Right lobe of liver (tissue), 6 donors: ENCODE measurements at regions of chr7 and their contacts with region 1.

Region 1: GRCh38 chr7:7438851-7439250 is 96.8 kb downstream of the COL28A1 start:
- DNase-seq: peak in 1 of 3 donors; percentile 35
- ATAC-seq: peak; percentile 81 to 99 (median 88)
- H3K4me3 ChIP-seq: no peak overlapping the region
- H3K27ac ChIP-seq: no peak overlapping the region
- H3K4me1 ChIP-seq: peaks cover 0 to 7% (median 0%) of the 10 kb centered on the region in 4 donors
- H3K27me3 ChIP-seq: no peaks in the 10 kb centered on the region
- CTCF ChIP-seq: no peak
- POLR2A ChIP-seq: no peak

Region 2: GRCh38 chr7:7535691-7536090 is 96.8 kb after region 1 on chr7 and contains the start of gene COL28A1:
- intact Hi-C with region 1: loop called in 1 of 2 experiments (anchors 10 kb)
- DNase-seq: no peak
- ATAC-seq: no peak
- H3K4me3 ChIP-seq: no peak within 1 kb of the TSS
- H3K27ac ChIP-seq: no peak within 1 kb of the TSS
- H3K4me1 ChIP-seq: no peaks in the 10 kb centered on the region
- H3K27me3 ChIP-seq: no peaks in the 10 kb centered on the region
- CTCF ChIP-seq: no peak
- POLR2A ChIP-seq: no peak
- total RNA-seq, gene COL28A1: 0.07 to 0.51 (median 0.34) TPM in 4 of 6 experiments, not detected in the others